HCT116 (cell line): ENCODE measurements at regions of chr4 and their contacts with region 1.

Region 1: DNA sequence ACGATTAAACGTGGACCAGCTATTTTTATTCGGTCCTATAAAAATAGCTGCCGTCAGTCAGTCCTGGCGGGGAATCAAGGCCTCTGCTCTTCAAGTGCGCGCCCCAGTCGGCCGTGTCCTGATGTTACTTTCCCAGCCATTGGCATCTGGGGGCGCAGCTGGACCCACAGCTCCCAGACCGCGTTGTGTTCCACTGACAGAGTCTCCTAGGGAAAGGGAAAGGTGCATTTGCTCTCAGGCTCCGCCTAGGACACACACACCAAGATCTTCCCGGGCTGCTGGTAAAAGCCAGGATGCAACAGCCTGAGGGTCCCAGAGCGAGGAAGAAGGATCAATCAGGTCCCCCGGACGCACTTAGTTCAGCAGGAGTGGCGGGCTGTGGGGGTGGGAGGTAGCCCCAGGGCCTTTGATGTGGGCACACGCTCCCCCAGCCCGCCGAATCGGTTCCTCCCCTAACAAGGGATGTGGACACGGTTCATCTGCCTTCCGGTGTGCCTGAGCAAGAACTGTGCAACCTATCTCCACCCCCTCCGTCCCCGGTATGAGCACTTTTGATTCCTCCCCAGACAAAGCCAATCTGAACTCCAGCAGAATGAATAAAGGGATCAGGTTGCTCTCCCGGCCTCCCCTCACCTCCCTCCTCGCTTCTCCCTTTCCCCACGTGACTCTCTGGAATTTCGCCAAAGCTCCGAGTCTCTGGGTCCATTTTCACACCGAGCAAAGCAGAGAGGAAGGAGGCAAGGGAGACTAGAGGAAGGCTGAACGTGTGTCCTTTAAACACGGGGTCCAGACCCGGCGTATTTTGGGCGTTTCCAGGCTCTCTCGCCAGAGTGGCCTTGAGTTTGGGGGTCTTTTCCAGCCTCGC is 626 bp upstream of the FRAS1 start:
- DNase-seq: peak; percentile 93
- ATAC-seq: peak; percentile 74
- H3K4me3 ChIP-seq: peak overlapping the region; percentile 70 to 89
- H3K27ac ChIP-seq: peak overlapping the region; percentile 94
- H3K4me1 ChIP-seq: peaks cover 7 to 18% of the 10 kb centered on the region in 2 experiments; a peak in 3 of 4 replicates
- H3K27me3 ChIP-seq: no peaks in the 10 kb centered on the region
- CTCF ChIP-seq: peak in 2 of 3 experiments; percentile 14 to 15; a peak in 2 of 6 replicates
- POLR2A ChIP-seq: peak; percentile 82
- RAD21 ChIP-seq: no peak

Region 2: GRCh38 chr4:76704133-76704881 is 1352.2 kb before region 1 on chr4:
- CTCF ChIA-PET with region 1: no interaction called
- POLR2A ChIA-PET with region 1: no interaction called
- RAD21 ChIA-PET with region 1: no interaction called
- intact Hi-C with region 1: no loop called
- DNase-seq: peak; percentile 68
- ATAC-seq: peak; percentile 84
- H3K4me3 ChIP-seq: peak overlapping the region in 1 of 2 experiments; percentile 38; a peak in 2 of 4 replicates
- H3K27ac ChIP-seq: peak overlapping the region; percentile 86
- H3K4me1 ChIP-seq: peaks cover 39 to 53% of the 10 kb centered on the region in 2 experiments
- H3K27me3 ChIP-seq: no peaks in the 10 kb centered on the region
- CTCF ChIP-seq: no peak
- POLR2A ChIP-seq: no peak
- RAD21 ChIP-seq: no peak

Region 3: GRCh38 chr4:78069859-78070258 is 13.4 kb after region 1 on chr4:
- CTCF ChIA-PET with region 1: interaction called, 17 read pairs
- POLR2A ChIA-PET with region 1: interaction called, 5 read pairs
- RAD21 ChIA-PET with region 1: no interaction called
- intact Hi-C with region 1: no loop called
- DNase-seq: no peak
- ATAC-seq: no peak
- H3K4me3 ChIP-seq: no peak overlapping the region
- H3K27ac ChIP-seq: no peak overlapping the region
- H3K4me1 ChIP-seq: no peaks in the 10 kb centered on the region
- H3K27me3 ChIP-seq: no peaks in the 10 kb centered on the region
- CTCF ChIP-seq: no peak
- POLR2A ChIP-seq: no peak
- RAD21 ChIP-seq: no peak

Region 4: GRCh38 chr4:78517050-78517652 is 460.7 kb after region 1 on chr4:
- CTCF ChIA-PET with region 1: interaction called, 6 read pairs
- POLR2A ChIA-PET with region 1: no interaction called
- RAD21 ChIA-PET with region 1: no interaction called
- intact Hi-C with region 1: loop called (anchors 1 kb)
- DNase-seq: no peak
- ATAC-seq: peak; percentile 76
- H3K4me3 ChIP-seq: no peak overlapping the region
- H3K27ac ChIP-seq: no peak overlapping the region
- H3K4me1 ChIP-seq: no peaks in the 10 kb centered on the region
- H3K27me3 ChIP-seq: no peaks in the 10 kb centered on the region
- CTCF ChIP-seq: peak; percentile 49 to 70 (median 64); a peak in 5 of 6 replicates
- POLR2A ChIP-seq: no peak
- RAD21 ChIP-seq: peak; percentile 77

Region 5: GRCh38 chr4:78569291-78569821 is 512.9 kb after region 1 on chr4:
- CTCF ChIA-PET with region 1: interaction called, 5 read pairs
- POLR2A ChIA-PET with region 1: interaction called, 3 read pairs
- RAD21 ChIA-PET with region 1: no interaction called
- intact Hi-C with region 1: loop called (anchors 5 kb)
- DNase-seq: peak; percentile 87
- ATAC-seq: peak; percentile 50
- H3K4me3 ChIP-seq: peak overlapping the region in 1 of 2 experiments; percentile 43; a peak in 2 of 4 replicates
- H3K27ac ChIP-seq: peak overlapping the region; percentile 100
- H3K4me1 ChIP-seq: peaks cover 64% of the 10 kb centered on the region in 2 experiments
- H3K27me3 ChIP-seq: no peaks in the 10 kb centered on the region
- CTCF ChIP-seq: no peak
- POLR2A ChIP-seq: no peak
- RAD21 ChIP-seq: no peak

Region 6: GRCh38 chr4:78938868-78939666 is 882.6 kb after region 1 on chr4 and contains the start of gene PAQR3:
- CTCF ChIA-PET with region 1: no interaction called
- POLR2A ChIA-PET with region 1: no interaction called
- RAD21 ChIA-PET with region 1: no interaction called
- intact Hi-C with region 1: loop called (anchors 5 kb)
- DNase-seq: peak; percentile 57
- ATAC-seq: peak; percentile 97
- H3K4me3 ChIP-seq: peak within 1 kb of the TSS; percentile 73 to 87
- H3K27ac ChIP-seq: peak within 1 kb of the TSS; percentile 60; the same call in 1 of the 2 replicates
- H3K4me1 ChIP-seq: peaks cover 0 to 17% of the 10 kb centered on the region in 2 experiments; a peak in 3 of 4 replicates
- H3K27me3 ChIP-seq: no peaks in the 10 kb centered on the region
- CTCF ChIP-seq: no peak
- POLR2A ChIP-seq: peak; percentile 91
- RAD21 ChIP-seq: 0 out of 2 replicates have a peak, but pooled peaks have one; percentile 11
- total RNA-seq, gene PAQR3: 32.3 TPM